Panc1 (cell line): ENCODE measurements at regions of chr11 and their contacts with region 1.

Region 1: GRCh38 chr11:129279326-129280026 is 87.4 kb upstream of the ARHGAP32 start:
- DNase-seq: no peak
- ATAC-seq: peak; percentile 94
- H3K4me3 ChIP-seq: peak overlapping the region; percentile 72 to 85
- H3K27ac ChIP-seq: peak overlapping the region; percentile 93
- H3K4me1 ChIP-seq: peaks cover 48% of the 10 kb centered on the region
- H3K27me3 ChIP-seq: no peaks in the 10 kb centered on the region
- CTCF ChIP-seq: peak; percentile 68

Region 2: GRCh38 chr11:129143335-129143734 is 136.1 kb before region 1 on chr11:
- CTCF ChIA-PET with region 1: no interaction called
- POLR2A ChIA-PET with region 1: no interaction called
- in situ Hi-C with region 1: no loop called
- intact Hi-C with region 1: loop called (anchors 10 kb)
- DNase-seq: peak; percentile 100
- ATAC-seq: peak; percentile 100
- H3K4me3 ChIP-seq: peak overlapping the region; percentile 27 to 28
- H3K27ac ChIP-seq: peak overlapping the region; percentile 100
- H3K4me1 ChIP-seq: peaks cover 80% of the 10 kb centered on the region
- H3K27me3 ChIP-seq: no peaks in the 10 kb centered on the region
- CTCF ChIP-seq: no peak

Region 3: GRCh38 chr11:129209891-129210830 is 69.3 kb before region 1 on chr11:
- CTCF ChIA-PET with region 1: no interaction called
- POLR2A ChIA-PET with region 1: no interaction called
- in situ Hi-C with region 1: no loop called
- intact Hi-C with region 1: no loop called
- DNase-seq: no peak
- ATAC-seq: peak; percentile 58
- H3K4me3 ChIP-seq: no peak overlapping the region
- H3K27ac ChIP-seq: peak overlapping the region; percentile 52; the same call in 1 of the 2 replicates
- H3K4me1 ChIP-seq: peaks cover 27% of the 10 kb centered on the region; the same call in 1 of the 2 replicates
- H3K27me3 ChIP-seq: no peaks in the 10 kb centered on the region
- CTCF ChIP-seq: no peak